Gastrocnemius medialis (tissue), 4 donors: ENCODE measurements at regions of chr4 and their contacts with region 1.

Region 1: DNA sequence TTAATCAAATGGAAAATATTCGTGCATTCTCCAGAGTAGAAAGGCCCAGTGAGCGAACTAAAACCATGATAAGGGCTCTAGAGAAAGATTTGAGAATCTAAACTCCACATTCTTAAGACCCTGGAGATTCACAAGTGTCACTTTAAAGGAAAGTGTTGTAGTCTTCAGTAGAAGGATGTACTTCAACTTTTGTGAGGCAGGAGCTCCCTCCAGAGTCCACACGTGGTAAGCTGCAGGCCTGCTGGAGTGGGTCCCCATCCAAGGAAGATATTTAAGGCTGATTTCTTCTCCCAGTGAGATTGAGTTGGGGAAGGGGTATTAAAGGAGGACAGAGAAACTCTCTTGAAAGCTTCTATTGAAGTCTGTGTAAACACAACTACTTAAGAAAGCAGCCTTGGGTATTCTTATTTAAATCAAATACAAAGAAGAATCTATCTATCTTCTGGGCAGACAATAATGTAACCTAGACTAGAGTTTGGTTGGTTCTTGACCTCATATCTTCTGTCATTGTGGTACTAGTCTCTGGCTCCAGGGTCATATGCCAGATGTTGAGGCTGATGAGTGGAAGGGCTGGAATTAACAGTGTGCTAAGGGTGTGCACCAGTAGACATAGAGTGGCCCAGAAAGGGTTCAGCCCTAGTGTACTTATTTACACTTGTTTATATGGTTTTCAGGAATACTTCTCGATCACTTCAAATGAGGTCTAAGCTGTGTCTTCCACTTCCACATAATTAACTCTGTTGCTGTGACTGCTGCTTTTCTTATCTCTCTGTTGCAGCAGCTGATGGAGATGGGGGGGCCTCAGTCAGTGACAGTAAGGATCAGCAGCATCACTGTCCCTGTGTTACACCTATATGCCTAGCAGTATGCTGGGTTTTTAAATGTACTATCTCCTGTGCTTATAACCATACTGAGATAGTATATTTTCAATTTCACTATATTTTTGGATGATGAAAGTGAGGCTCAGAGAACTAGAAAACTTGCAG is 76.1 kb downstream of the HMGB2 start:
- DNase-seq: peak; percentile 27 to 30
- ATAC-seq: peak; percentile 74 to 75
- H3K4me3 ChIP-seq: no peak overlapping the region
- H3K27ac ChIP-seq: no peak overlapping the region
- H3K4me1 ChIP-seq: peaks cover 0 to 1% of the 10 kb centered on the region in 2 donors
- H3K27me3 ChIP-seq: peaks cover 0 to 2% (median 0%) of the 10 kb centered on the region in 3 donors
- CTCF ChIP-seq: peak; percentile 42 to 75 (median 65)
- POLR2A ChIP-seq: no peak

Region 2: GRCh38 chr4:173013232-173013930 is 244.6 kb before region 1 on chr4:
- in situ Hi-C with region 1: loop called in 3 of 4 experiments (anchors 5 to 10 kb)
- intact Hi-C with region 1: loop called (anchors 1 kb)
- DNase-seq: no peak
- ATAC-seq: peak; percentile 50 to 61
- H3K4me3 ChIP-seq: no peak overlapping the region
- H3K27ac ChIP-seq: no peak overlapping the region
- H3K4me1 ChIP-seq: no peaks in the 10 kb centered on the region
- H3K27me3 ChIP-seq: no peaks in the 10 kb centered on the region
- CTCF ChIP-seq: peak; percentile 29 to 81 (median 39)
- POLR2A ChIP-seq: no peak

Region 3: GRCh38 chr4:173019711-173020110 is 238.3 kb before region 1 on chr4:
- in situ Hi-C with region 1: loop called in 2 of 4 experiments (anchors 5 to 10 kb)
- intact Hi-C with region 1: no loop called
- DNase-seq: no peak
- ATAC-seq: no peak
- H3K4me3 ChIP-seq: no peak overlapping the region
- H3K27ac ChIP-seq: no peak overlapping the region
- H3K4me1 ChIP-seq: no peaks in the 10 kb centered on the region
- H3K27me3 ChIP-seq: no peaks in the 10 kb centered on the region
- CTCF ChIP-seq: no peak
- POLR2A ChIP-seq: no peak

Region 4: GRCh38 chr4:173025131-173025530 is 232.9 kb before region 1 on chr4:
- in situ Hi-C with region 1: loop called in 1 of 4 experiments (anchors 5 kb)
- intact Hi-C with region 1: loop called (anchors 1 kb)
- DNase-seq: no peak
- ATAC-seq: peak; percentile 49 to 56
- H3K4me3 ChIP-seq: no peak overlapping the region
- H3K27ac ChIP-seq: no peak overlapping the region
- H3K4me1 ChIP-seq: no peaks in the 10 kb centered on the region
- H3K27me3 ChIP-seq: no peaks in the 10 kb centered on the region
- CTCF ChIP-seq: peak in 4 of 5 experiments; percentile 35 to 44 (median 40)
- POLR2A ChIP-seq: no peak

Region 5: GRCh38 chr4:173168396-173169177 is 89.4 kb before region 1 on chr4 and contains the start of gene GALNT7:
- in situ Hi-C with region 1: no loop called
- intact Hi-C with region 1: loop called (anchors 5 kb)
- DNase-seq: peak in 1 of 2 donors; percentile 28
- ATAC-seq: peak; percentile 52 to 59
- H3K4me3 ChIP-seq: peak within 1 kb of the TSS; percentile 60 to 82 (median 74)
- H3K27ac ChIP-seq: peak within 1 kb of the TSS; percentile 73 to 80 (median 77)
- H3K4me1 ChIP-seq: peaks cover 6 to 9% of the 10 kb centered on the region in 2 donors
- H3K27me3 ChIP-seq: peaks cover 9 to 16% (median 14%) of the 10 kb centered on the region in 3 donors
- CTCF ChIP-seq: no peak
- POLR2A ChIP-seq: no peak
- total RNA-seq, gene GALNT7: 0.91 to 2.8 (median 1.1) TPM

Region 6: GRCh38 chr4:173301518-173302201 is 43.6 kb after region 1 on chr4:
- in situ Hi-C with region 1: no loop called
- intact Hi-C with region 1: no loop called
- DNase-seq: no peak
- ATAC-seq: no peak
- H3K4me3 ChIP-seq: no peak overlapping the region
- H3K27ac ChIP-seq: no peak overlapping the region
- H3K4me1 ChIP-seq: no peaks in the 10 kb centered on the region
- H3K27me3 ChIP-seq: no peaks in the 10 kb centered on the region
- CTCF ChIP-seq: peak in 4 of 5 experiments; percentile 15 to 75 (median 54)
- POLR2A ChIP-seq: no peak

Region 7: GRCh38 chr4:173360587-173361221 is 102.7 kb after region 1 on chr4:
- in situ Hi-C with region 1: no loop called
- intact Hi-C with region 1: no loop called
- DNase-seq: no peak
- ATAC-seq: no peak
- H3K4me3 ChIP-seq: no peak overlapping the region
- H3K27ac ChIP-seq: no peak overlapping the region
- H3K4me1 ChIP-seq: no peaks in the 10 kb centered on the region
- H3K27me3 ChIP-seq: no peaks in the 10 kb centered on the region
- CTCF ChIP-seq: no peak
- POLR2A ChIP-seq: no peak